Activated CD4-positive, alpha-beta memory T cell treated with anti-CD3 and anti-CD28 coated beads for 36 hours (primary cell): ENCODE measurements at regions of chr3 and their contacts with region 1.

Region 1: GRCh38 chr3:111648991-111649579 is 53.9 kb upstream of the ZBED2 start:
- DNase-seq: no peak
- H3K4me3 Mint-ChIP-seq: no peak overlapping the region
- H3K27ac Mint-ChIP-seq: peak overlapping the region; percentile 29
- H3K4me1 Mint-ChIP-seq: peaks cover 19% of the 10 kb centered on the region
- H3K27me3 Mint-ChIP-seq: no peaks in the 10 kb centered on the region

Region 2: DNA sequence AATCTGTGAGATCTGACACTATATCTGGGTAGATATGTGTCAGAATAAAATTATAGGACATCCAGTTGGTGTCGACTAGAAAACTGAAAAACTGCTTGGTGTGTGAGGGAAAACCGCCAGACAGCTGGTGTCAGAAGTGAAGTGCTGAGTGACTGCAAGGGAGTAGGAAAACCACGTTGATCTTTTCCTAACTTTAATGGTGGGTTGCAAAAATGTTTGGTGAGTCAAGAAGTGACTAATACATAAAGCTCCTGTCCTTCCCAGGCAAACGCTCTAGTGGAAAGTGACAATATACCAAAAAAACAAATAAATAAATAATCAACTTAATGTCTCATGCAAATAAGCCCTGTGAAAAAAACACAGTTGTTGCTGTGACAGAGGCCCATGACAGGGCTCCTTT is 114.4 kb before region 1 on chr3:
- CTCF ChIA-PET with region 1: no interaction called
- POLR2A ChIA-PET with region 1: no interaction called
- intact Hi-C with region 1: no loop called
- DNase-seq: no peak
- H3K4me3 Mint-ChIP-seq: no peak overlapping the region
- H3K27ac Mint-ChIP-seq: no peak overlapping the region
- H3K4me1 Mint-ChIP-seq: peaks cover 30% of the 10 kb centered on the region
- H3K27me3 Mint-ChIP-seq: no peaks in the 10 kb centered on the region

Region 3: GRCh38 chr3:111627092-111627491 is 22.0 kb before region 1 on chr3:
- CTCF ChIA-PET with region 1: no interaction called
- POLR2A ChIA-PET with region 1: no interaction called
- intact Hi-C with region 1: loop called (anchors 2 kb)
- DNase-seq: no peak
- H3K4me3 Mint-ChIP-seq: no peak overlapping the region
- H3K27ac Mint-ChIP-seq: no peak overlapping the region
- H3K4me1 Mint-ChIP-seq: peaks cover 4% of the 10 kb centered on the region
- H3K27me3 Mint-ChIP-seq: no peaks in the 10 kb centered on the region

Region 4: GRCh38 chr3:111729087-111729846 is 80.2 kb after region 1 on chr3:
- CTCF ChIA-PET with region 1: no interaction called
- POLR2A ChIA-PET with region 1: no interaction called
- intact Hi-C with region 1: no loop called
- DNase-seq: no peak
- H3K4me3 Mint-ChIP-seq: no peak overlapping the region
- H3K27ac Mint-ChIP-seq: no peak overlapping the region
- H3K4me1 Mint-ChIP-seq: no peaks in the 10 kb centered on the region
- H3K27me3 Mint-ChIP-seq: no peaks in the 10 kb centered on the region